ENCODE measurements at regions of chr7 and their contacts with region 1.

Region 1: DNA sequence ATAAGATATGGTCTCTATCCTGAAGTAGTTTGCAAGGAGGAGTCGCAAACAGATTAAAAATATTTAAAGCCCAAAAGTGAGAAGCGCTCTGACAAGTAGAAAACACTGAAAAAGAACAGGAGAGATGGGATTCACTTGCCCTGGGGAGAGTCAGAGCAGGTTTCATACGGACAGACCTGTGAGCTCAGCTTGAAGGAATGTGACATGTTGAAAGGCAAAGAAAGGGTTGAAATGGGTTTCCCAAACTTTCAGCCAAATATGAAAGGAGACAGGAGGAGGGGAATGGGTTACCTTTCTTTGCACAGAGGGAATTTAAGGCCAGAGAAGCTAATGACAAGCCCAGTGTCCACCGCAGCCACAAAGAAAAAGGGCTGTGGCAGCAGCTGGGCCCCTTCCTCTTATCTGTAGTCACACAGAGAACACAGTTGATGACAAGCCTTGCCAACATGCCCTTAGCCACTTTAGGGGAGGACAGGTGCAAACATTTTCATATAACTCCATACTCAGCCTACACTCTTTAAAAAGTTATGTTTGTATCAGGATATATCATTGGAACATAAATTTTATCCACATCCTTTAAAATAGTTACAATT is 14.9 kb downstream of the HOXA1 start:
- DNase-seq: peak; percentile 72
- H3K4me3 ChIP-seq: no peak overlapping the region
- H3K27ac ChIP-seq: peak overlapping the region; percentile 74
- H3K4me1 ChIP-seq: peaks cover 35% of the 10 kb centered on the region
- H3K27me3 ChIP-seq: no peaks in the 10 kb centered on the region
- CTCF ChIP-seq: no peak

Region 2: DNA sequence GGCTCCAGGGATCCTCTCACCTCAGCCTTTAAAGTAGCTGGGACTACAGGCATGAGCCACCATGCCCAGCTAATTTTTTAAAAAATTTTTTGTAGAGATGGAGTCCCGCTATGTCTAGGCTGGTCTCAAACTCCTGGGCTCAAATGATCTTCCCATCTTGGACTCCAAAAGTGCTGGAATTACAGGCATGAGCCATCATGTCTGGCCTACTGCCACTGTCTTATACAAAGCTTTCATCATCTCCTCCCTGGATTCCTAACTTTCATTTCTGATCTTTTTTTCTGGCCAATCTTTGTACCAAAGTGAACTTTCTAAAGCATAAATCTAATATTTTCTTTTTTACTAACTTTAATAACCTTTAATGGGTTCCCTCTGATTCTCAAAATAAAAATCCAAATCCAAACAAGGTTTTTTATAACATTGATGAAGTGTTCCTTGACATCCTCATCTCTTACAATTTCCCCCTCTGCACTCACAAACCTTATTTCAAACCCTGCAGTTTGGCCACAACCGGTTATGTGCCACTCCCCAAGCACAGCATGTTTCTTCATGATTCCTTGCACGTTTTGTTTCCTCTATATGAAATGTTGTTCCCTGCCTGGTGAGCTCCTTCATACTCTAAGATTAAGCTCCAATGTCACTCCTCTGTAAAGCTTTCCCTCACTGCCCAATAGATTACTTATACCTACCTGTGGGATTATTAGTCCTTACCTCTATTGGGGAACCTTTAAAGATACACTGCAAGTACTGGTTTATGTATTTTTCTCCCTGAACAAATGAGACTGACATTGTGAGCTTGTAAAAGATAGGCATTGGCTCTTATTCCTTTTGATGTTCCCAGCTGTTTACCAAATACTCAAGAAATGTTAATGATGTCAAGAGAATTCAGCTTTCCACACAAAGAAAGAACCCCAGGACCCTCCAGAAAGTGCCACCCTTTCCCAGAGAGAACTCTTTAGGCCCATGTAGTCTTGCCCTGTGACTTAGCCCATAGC is 86.8 kb before region 1 on chr7:
- CTCF ChIA-PET with region 1: interaction called, 12 read pairs
- dilution Hi-C with region 1: no loop called
- in situ Hi-C with region 1: no loop called
- intact Hi-C with region 1: no loop called
- DNase-seq: peak; percentile 47
- H3K4me3 ChIP-seq: no peak overlapping the region
- H3K27ac ChIP-seq: peak overlapping the region; percentile 61
- H3K4me1 ChIP-seq: peaks cover 34% of the 10 kb centered on the region
- H3K27me3 ChIP-seq: no peaks in the 10 kb centered on the region
- CTCF ChIP-seq: no peak

Region 3: DNA sequence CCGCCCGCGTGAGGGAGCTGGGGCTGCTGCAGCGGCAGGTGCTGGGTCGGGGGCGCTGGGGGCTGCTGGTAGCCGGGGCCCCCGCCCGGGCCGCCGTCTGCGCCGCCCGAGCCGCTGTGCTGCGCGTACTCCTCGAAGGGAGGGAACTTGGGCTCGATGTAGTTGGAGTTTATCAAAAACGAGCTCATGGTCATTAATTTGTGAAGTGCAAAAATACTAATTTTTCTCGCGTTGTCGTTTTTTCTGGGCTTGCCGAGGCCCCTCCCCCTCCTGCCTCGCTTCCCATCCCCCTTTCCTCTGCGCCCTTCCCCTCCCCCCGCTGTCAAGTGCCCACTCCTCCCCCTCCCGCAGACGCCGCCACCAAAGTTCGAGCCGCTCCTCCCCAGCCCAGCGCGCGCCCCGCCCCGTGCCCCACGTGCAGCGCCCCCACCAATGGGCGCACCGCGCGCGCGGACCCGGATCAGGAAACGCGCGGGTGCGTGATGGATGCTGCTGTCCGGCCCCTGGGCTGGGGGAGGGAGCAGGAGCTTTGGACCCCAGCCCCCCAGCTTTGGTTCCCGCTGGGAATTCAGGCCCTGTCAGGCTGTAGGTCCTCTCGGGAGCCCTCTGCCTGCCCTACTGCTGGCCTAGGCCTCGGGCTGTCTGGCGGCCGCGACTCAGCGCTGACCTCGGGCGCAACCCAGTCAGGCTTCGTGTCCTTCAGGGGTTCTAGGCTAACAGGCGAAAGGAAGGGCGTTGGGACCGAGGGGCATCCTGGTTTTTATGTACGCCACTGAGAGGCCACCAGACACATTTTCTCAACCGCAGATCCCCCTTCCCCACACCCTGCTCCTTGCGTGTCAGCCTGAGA is 49.8 kb after region 1 on chr7 and contains the start of gene HOXA4:
- CTCF ChIA-PET with region 1: no interaction called
- dilution Hi-C with region 1: loop called (anchors 5 kb)
- in situ Hi-C with region 1: no loop called
- intact Hi-C with region 1: no loop called
- DNase-seq: peak; percentile 89
- H3K4me3 ChIP-seq: peak within 1 kb of the TSS; percentile 59 to 73 (median 63)
- H3K27ac ChIP-seq: peak within 1 kb of the TSS; percentile 35
- H3K4me1 ChIP-seq: peaks cover 34% of the 10 kb centered on the region
- H3K27me3 ChIP-seq: no peaks in the 10 kb centered on the region
- CTCF ChIP-seq: no peak
- total RNA-seq, gene HOXA4: 1.5 TPM in 1 of 2 donors, not detected in the other